Left colon (tissue), 2 donors: ENCODE measurements at regions of chr10 and their contacts with region 1.

Region 1: DNA sequence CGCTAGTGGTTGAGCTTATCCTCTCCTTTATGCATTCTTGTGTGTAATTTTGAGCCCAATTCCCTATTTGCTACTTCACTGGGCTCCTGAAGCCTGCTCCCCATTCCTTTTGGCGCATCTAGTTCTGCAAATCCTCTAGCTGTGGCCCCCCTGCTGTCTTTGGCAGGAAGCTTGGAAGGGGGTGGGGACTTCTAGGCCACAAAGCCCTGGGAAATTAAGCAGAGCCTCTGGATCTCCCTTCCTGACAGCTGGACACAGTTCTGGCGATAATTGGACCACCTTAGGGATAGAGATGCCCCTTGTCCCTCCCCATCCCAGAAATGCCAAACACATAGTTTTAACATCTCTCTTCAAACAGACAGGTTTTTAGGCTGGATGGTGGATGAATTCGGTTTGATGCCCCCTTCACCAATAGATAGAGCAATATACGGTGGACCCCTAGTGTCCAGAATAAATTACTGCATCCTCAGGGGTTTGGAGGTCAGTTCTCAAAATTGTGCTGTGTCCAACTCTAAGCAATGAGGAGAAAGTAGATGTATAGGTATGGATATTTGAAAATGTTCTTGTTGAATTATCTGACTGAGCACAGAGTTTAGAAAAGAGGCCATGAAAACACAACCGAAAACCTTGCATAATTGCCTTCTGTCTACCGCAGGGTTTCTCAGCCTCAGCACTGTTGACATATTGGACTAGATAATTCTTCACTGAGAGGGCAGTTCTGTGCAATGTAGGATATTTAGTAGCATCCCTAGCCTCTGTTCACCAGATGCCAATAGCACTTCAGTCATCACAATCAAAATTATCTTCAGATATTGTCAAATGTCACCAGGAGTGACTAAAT is 75.5 kb downstream of the PAPSS2 start:
- DNase-seq: peak in 1 of 2 donors; percentile 9
- ATAC-seq: peak; percentile 64

Region 2: DNA sequence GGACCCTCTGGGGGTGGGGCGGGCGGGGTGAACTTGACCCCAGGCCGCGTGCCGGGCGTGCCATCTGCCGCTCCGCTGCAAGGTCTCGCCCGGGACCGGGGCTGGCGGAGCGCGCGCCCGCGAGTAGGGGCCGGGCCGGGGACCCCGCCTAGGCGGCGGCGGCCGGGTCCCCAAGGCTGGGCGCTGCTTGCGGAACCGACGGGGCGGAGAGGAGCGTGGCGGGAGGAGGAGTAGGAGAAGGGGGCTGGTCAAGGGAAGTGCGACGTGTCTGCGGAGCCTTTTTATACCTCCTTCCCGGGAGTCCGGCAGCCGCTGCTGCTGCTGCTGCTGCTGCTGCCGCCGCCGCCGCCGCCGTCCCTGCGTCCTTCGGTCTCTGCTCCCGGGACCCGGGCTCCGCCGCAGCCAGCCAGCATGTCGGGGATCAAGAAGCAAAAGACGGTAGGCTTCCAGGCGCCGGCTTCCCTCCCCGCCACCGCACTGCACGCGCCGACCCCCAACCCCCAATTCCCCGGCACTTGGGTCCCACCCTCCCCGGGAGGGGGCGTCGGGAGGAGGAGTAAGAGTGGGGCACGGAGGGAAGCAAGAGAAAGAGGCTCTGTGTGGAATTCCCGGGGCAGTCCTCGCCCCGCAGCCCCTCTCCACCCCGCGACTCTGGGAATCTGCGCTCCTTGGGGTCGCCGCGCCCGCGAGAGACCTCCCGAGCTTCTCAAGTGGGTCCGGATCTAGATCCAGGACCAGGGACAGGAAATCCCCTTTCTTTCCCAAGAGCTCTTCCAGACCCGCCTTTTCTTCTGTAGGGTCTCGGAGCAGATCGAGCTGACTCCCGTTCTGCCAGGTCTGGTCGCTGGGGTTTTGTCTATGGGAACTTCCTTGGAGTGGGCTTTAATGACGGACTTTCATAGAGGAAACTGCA is 75.4 kb before region 1 on chr10 and contains the start of gene PAPSS2:
- intact Hi-C with region 1: loop called in 1 of 2 experiments (anchors 10 kb)
- DNase-seq: peak; percentile 68 to 76
- ATAC-seq: peak; percentile 86
- total RNA-seq, gene PAPSS2: 219 to 322 TPM